ENCODE measurements at regions of chr4 and their contacts with region 1.

Region 1: GRCh38 chr4:83110223-83110945 is 4.1 kb downstream of the PLAC8 start:
- DNase-seq: peak; percentile 89
- H3K4me3 Mint-ChIP-seq: peak overlapping the region; percentile 66
- H3K27ac Mint-ChIP-seq: peak overlapping the region; percentile 61
- H3K4me1 Mint-ChIP-seq: peaks cover 21% of the 10 kb centered on the region
- H3K27me3 Mint-ChIP-seq: no peaks in the 10 kb centered on the region
- CTCF ChIP-seq: no peak

Region 2: GRCh38 chr4:83074086-83074704 is 36.2 kb before region 1 on chr4:
- CTCF ChIA-PET with region 1: interaction called, 11 read pairs
- intact Hi-C with region 1: no loop called
- DNase-seq: peak; percentile 52
- H3K4me3 Mint-ChIP-seq: no peak overlapping the region
- H3K27ac Mint-ChIP-seq: no peak overlapping the region
- H3K4me1 Mint-ChIP-seq: no peaks in the 10 kb centered on the region
- H3K27me3 Mint-ChIP-seq: no peaks in the 10 kb centered on the region
- CTCF ChIP-seq: peak; percentile 37

Region 3: DNA sequence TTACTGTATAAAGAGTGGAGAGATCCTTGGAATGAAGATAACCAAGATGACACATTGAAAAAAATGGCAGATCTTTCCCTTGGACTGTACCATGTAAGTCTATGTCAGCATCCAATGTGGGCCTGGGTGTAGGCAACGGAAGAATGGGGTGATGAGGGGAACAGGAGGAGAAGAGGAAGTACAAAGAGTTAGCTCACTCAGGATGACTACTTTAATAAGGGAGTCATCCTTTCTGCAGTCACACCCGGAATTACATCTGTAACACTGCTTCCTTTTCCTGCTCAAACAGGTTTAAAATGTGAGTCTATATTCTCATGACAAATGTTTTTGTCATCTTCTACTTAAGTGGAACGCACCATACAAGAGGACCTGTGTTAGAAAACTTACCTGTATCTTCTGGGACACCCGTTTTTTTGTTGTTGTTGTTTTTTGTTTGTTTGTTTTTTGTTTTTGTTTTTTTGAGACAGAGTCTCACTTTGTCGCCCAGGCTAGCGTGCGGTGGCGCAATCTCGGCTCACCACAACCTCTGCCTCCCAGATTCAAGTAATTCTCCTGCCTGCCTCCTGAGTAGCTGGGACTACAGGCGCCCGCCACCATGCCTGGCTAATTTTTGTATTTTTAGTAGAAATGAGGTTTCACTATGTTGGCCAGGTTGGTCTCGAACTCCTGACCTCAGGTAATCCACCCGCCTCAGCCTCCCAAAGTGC is 206.2 kb after region 1 on chr4:
- CTCF ChIA-PET with region 1: no interaction called
- intact Hi-C with region 1: no loop called
- DNase-seq: no peak
- H3K4me3 Mint-ChIP-seq: no peak overlapping the region
- H3K27ac Mint-ChIP-seq: no peak overlapping the region
- H3K4me1 Mint-ChIP-seq: no peaks in the 10 kb centered on the region
- H3K27me3 Mint-ChIP-seq: no peaks in the 10 kb centered on the region
- CTCF ChIP-seq: no peak

Region 4: GRCh38 chr4:83334425-83335241 is 224.2 kb after region 1 on chr4 and contains the start of gene HPSE:
- CTCF ChIA-PET with region 1: no interaction called
- intact Hi-C with region 1: no loop called
- DNase-seq: peak; percentile 80
- H3K4me3 Mint-ChIP-seq: peak within 1 kb of the TSS; percentile 81
- H3K27ac Mint-ChIP-seq: peak within 1 kb of the TSS; percentile 78
- H3K4me1 Mint-ChIP-seq: no peaks in the 10 kb centered on the region
- H3K27me3 Mint-ChIP-seq: no peaks in the 10 kb centered on the region
- CTCF ChIP-seq: no peak
- total RNA-seq, gene HPSE: 5.1 and 5.2 TPM in 2 replicates

Region 5: GRCh38 chr4:83605744-83606172 is 495.4 kb after region 1 on chr4:
- CTCF ChIA-PET with region 1: no interaction called
- intact Hi-C with region 1: no loop called
- DNase-seq: no peak
- H3K4me3 Mint-ChIP-seq: no peak overlapping the region
- H3K27ac Mint-ChIP-seq: no peak overlapping the region
- H3K4me1 Mint-ChIP-seq: no peaks in the 10 kb centered on the region
- H3K27me3 Mint-ChIP-seq: no peaks in the 10 kb centered on the region
- CTCF ChIP-seq: no peak